Transverse colon (tissue), 4 donors: ENCODE measurements at regions of chrX and their contacts with region 1.

Region 1: DNA sequence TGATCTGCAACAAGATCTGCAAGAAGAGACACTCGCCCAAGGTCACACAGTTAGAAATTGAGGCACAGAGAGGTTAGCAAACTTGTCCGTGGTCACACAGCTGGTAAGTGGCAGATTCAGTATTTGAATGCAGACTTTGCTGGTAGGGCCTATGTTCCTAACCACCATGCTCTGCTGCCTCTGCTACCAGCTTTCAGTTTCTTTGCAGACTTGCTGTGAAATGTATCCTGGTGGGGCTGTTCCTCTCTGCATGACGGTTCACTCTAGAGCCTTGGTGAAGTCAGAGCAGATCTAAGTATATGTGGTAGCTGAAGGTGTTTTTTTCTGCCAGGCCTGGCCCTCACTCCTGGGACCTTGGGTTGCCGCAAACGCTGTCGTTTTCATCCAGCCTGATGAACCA is 87.1 kb downstream of the BEND2 start:
- DNase-seq: no peak
- H3K4me3 ChIP-seq: no peak overlapping the region
- H3K27ac ChIP-seq: no peak overlapping the region
- H3K4me1 ChIP-seq: no peaks in the 10 kb centered on the region
- H3K27me3 ChIP-seq: no peaks in the 10 kb centered on the region
- CTCF ChIP-seq: no peak
- EP300 ChIP-seq: no peak
- POLR2A ChIP-seq: no peak

Region 2: GRCh38 chrX:17876164-17876563 is 257.4 kb before region 1 on chrX:
- in situ Hi-C with region 1: no loop called
- intact Hi-C with region 1: no loop called
- DNase-seq: no peak
- H3K4me3 ChIP-seq: no peak overlapping the region
- H3K27ac ChIP-seq: no peak overlapping the region
- H3K4me1 ChIP-seq: no peaks in the 10 kb centered on the region
- H3K27me3 ChIP-seq: no peaks in the 10 kb centered on the region
- CTCF ChIP-seq: peak in 1 of 5 experiments; percentile 8
- EP300 ChIP-seq: no peak
- POLR2A ChIP-seq: no peak

Region 3: GRCh38 chrX:18098763-18099162 is 34.8 kb before region 1 on chrX:
- in situ Hi-C with region 1: no loop called
- intact Hi-C with region 1: loop called (anchors 1 kb)
- DNase-seq: no peak
- H3K4me3 ChIP-seq: no peak overlapping the region
- H3K27ac ChIP-seq: no peak overlapping the region
- H3K4me1 ChIP-seq: no peaks in the 10 kb centered on the region
- H3K27me3 ChIP-seq: no peaks in the 10 kb centered on the region
- CTCF ChIP-seq: no peak
- EP300 ChIP-seq: no peak
- POLR2A ChIP-seq: no peak